Dendritic cell treated with granulocyte-macrophage colony-stimulating factor and Interleukin-4, amounts not matched to agents 40 ng/mL and 50 ng/mL, for 4 days (primary cell): ENCODE measurements at regions of chr1 and their contacts with region 1.

Region 1: DNA sequence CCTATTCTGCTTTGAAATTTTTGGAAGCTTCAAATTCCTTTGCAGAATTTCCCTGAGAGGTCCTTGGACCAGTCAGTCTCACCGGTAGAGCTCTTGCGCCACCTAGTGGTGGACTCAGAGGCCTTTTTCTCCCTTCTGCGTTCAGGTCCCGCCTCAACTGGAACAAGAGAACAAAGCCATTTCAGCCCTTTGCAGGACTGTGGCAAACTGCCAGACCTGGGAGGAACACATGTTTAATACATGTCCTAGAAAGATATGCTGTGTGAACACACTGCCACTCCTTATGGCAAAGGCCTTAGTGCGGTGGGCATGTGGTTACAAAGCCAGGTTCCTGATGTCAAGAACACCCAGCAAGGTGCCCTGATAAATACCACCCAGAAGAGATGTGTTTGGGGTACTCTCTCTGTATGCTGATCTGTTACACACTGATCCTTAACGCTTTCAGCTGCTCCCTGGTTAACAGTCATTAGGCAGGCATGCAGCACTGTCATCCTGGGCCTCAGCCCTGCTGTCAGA is 82.2 kb upstream of the SSX2IP start:
- H3K4me3 Mint-ChIP-seq: no peak overlapping the region
- H3K27ac Mint-ChIP-seq: no peak overlapping the region
- H3K4me1 Mint-ChIP-seq: no peaks in the 10 kb centered on the region
- H3K27me3 Mint-ChIP-seq: peaks cover 1% of the 10 kb centered on the region

Region 2: DNA sequence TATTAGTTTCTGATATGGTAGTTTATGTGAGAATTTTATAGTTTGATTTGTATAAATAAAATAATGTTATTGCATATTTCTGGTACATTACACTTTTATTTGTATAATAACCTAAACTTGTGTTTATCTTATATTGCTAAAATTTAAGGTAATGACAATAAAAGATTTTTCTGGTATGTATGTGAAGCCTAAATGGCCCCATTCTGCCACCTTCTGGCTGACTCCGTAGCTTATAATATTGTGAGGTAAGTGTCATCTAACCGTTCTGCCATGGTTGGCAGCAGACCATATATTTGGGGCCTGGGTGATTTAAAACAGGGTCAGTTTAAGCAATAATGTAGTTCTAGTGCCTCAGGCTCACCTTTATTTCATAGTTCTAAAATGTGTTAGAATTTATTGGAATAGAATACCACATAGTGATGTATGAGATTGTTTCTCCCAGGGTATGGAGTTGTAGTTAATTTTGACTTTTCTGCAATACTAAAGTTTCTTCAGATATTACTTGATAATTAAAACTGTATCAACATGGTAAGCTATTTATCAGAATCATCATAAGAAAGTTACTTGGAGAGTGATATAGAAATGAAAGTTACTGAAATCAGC is 649.6 kb before region 1 on chr1:
- intact Hi-C with region 1: loop called (anchors 5 kb)
- H3K4me3 Mint-ChIP-seq: no peak overlapping the region
- H3K27ac Mint-ChIP-seq: no peak overlapping the region
- H3K4me1 Mint-ChIP-seq: no peaks in the 10 kb centered on the region
- H3K27me3 Mint-ChIP-seq: no peaks in the 10 kb centered on the region

Region 3: DNA sequence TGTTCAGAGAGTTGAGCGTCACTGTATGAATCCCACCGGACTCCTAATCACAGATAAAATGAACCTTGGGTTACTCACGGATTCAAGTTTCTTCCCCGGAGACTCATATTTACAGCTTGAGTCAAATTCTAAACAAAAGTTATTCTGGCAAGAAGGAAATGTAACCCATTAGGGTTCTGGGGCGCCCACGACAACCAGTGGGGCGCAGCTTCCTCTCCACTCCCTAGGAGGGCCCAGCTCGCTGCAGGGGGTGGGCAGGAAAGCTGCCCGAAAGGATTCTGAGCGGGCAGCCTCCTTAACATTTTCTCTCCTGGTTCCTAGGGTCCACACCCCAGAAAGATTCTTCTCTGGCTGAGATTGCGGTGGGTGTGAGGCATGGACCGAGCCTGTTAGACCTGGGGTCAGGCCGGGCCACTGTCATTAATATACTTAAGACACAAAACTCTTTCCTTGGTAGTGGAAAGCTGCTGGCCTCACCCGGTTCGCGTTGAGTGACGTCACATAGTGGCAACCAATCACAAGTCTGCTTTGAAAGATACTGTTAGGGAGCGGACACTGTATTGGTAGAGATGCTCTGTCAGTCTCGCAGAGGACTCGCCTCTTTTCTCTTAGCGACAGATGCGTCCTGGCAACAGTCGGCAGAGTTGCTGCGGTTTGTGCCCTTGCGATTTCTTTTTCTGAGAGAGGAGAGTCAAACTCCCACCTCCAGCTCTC is 289.4 kb after region 1 on chr1:
- intact Hi-C with region 1: no loop called
- H3K4me3 Mint-ChIP-seq: peak overlapping the region; percentile 73
- H3K27ac Mint-ChIP-seq: peak overlapping the region; percentile 90
- H3K4me1 Mint-ChIP-seq: peaks cover 25% of the 10 kb centered on the region
- H3K27me3 Mint-ChIP-seq: peaks cover 6% of the 10 kb centered on the region